GM12878 (cell line): ENCODE measurements at regions of chr1 and their contacts with region 1.

Region 1: GRCh38 chr1:44089371-44090049 is 29.1 kb upstream of the KLF17 start:
- DNase-seq: no peak
- ATAC-seq: no peak
- H3K4me3 ChIP-seq: no peak overlapping the region
- H3K27ac ChIP-seq: no peak overlapping the region
- H3K4me1 ChIP-seq: no peaks in the 10 kb centered on the region
- H3K27me3 ChIP-seq: no peaks in the 10 kb centered on the region
- CTCF ChIP-seq: no peak
- EP300 ChIP-seq: no peak
- POLR2A ChIP-seq: no peak
- RAD21 ChIP-seq: no peak

Region 2: DNA sequence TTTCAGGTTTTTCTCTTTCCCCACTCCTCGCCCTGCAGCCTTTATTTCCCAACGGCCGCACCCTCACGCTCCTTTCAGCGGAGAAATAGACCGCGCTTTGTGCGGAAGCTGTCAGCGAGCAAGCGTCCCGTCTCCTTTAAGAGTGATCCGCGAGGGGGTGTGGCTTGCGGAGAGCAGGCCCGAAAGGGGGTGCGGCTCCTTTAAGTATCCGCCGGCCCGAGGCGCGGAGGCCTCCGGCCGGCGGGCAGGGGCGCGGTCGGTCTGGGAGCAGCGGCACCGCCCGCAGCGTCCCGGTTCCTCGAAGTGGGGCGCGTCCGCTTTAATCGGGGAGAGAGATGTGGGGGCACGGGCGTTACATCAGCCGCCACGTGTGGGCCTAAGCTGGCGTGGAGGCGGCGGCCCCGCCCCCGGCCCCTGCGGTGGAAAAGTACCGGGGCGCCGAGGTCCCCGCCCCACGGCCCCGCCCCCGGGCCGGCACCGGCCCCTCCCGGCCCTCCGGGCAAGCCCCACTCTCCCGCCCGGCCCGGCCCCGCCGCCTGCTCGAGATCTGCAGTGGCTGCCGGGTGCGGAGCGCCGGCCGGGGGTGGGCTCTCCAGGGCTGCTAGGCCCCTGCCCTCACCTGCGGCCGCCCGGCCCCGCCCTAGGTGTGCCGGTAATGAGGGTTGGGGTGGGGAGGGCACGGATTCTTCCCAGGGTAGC is 59.5 kb before region 1 on chr1:
- CTCF ChIA-PET with region 1: no interaction called
- POLR2A ChIA-PET with region 1: no interaction called
- RAD21 ChIA-PET with region 1: no interaction called
- SMC1A ChIA-PET with region 1: no interaction called
- in situ Hi-C with region 1: no loop called
- intact Hi-C with region 1: no loop called
- DNase-seq: peak; percentile 45
- ATAC-seq: peak; percentile 89
- H3K4me3 ChIP-seq: peak overlapping the region; percentile 65
- H3K27ac ChIP-seq: peak overlapping the region; percentile 79
- H3K4me1 ChIP-seq: peaks cover 10% of the 10 kb centered on the region
- H3K27me3 ChIP-seq: no peaks in the 10 kb centered on the region
- CTCF ChIP-seq: no peak
- EP300 ChIP-seq: 0 out of 4 replicates have a peak, but pooled peaks of 1 of the 2 experiments have one; percentile 13
- POLR2A ChIP-seq: peak; percentile 62
- RAD21 ChIP-seq: no peak

Region 3: GRCh38 chr1:44318097-44319088 is 228.9 kb after region 1 on chr1:
- CTCF ChIA-PET with region 1: interaction called, 3 read pairs
- POLR2A ChIA-PET with region 1: no interaction called
- RAD21 ChIA-PET with region 1: interaction called, 3 read pairs
- SMC1A ChIA-PET with region 1: interaction called, 3 read pairs
- in situ Hi-C with region 1: no loop called
- intact Hi-C with region 1: loop called (anchors 5 kb)
- DNase-seq: no peak
- ATAC-seq: peak; percentile 57
- H3K4me3 ChIP-seq: no peak overlapping the region
- H3K27ac ChIP-seq: no peak overlapping the region
- H3K4me1 ChIP-seq: no peaks in the 10 kb centered on the region
- H3K27me3 ChIP-seq: no peaks in the 10 kb centered on the region
- CTCF ChIP-seq: peak; percentile 68 to 86 (median 79)
- EP300 ChIP-seq: no peak
- POLR2A ChIP-seq: no peak
- RAD21 ChIP-seq: peak; percentile 51